A673 (cell line): ENCODE measurements at regions of chr7 and their contacts with region 1.

Region 1: GRCh38 chr7:82109288-82109687 is 334.3 kb downstream of the CACNA2D1 start:
- DNase-seq: peak; percentile 50
- H3K4me3 ChIP-seq: no peak overlapping the region
- H3K27ac ChIP-seq: no peak overlapping the region
- H3K4me1 ChIP-seq: peaks cover 47% of the 10 kb centered on the region
- H3K27me3 ChIP-seq: no peaks in the 10 kb centered on the region
- CTCF ChIP-seq: no peak

Region 2: GRCh38 chr7:82146491-82146890 is 37.2 kb after region 1 on chr7:
- CTCF ChIA-PET with region 1: no interaction called
- POLR2A ChIA-PET with region 1: interaction called, 16 read pairs
- intact Hi-C with region 1: no loop called
- DNase-seq: no peak
- H3K4me3 ChIP-seq: no peak overlapping the region
- H3K27ac ChIP-seq: no peak overlapping the region
- H3K4me1 ChIP-seq: peaks cover 14% of the 10 kb centered on the region
- H3K27me3 ChIP-seq: peaks cover 16% of the 10 kb centered on the region
- CTCF ChIP-seq: no peak

Region 3: DNA sequence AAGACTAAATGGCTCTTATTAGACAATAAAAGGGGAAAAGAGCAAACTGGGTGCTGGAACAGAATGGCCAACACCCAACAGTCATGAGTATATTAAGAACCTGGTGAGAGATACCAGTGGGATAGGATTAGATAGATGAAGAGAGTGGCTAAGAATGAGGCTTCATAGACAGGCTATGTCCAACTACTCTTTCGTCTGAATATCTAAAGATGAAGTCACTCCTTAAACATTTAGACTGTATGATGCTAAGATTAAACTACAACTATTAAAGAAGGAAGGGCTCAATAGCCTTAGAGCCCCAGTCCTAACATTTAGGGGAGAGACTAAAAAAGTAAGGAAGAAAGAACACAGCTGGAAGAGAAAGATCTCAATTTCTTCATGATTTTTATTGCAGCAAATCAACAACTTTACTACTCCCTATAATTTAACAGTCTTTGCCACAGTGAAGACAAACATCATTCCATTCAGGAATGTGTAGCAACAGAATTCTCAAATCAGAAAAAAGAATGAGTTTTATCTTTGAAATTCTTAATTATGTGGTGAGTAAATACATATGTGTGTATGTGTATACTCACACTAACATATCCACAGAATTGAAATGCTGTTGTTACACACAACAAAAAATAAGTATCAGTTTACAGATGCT is 288.7 kb after region 1 on chr7:
- CTCF ChIA-PET with region 1: no interaction called
- POLR2A ChIA-PET with region 1: no interaction called
- intact Hi-C with region 1: no loop called
- DNase-seq: no peak
- H3K4me3 ChIP-seq: no peak overlapping the region
- H3K27ac ChIP-seq: peak overlapping the region; percentile 45
- H3K4me1 ChIP-seq: peaks cover 46% of the 10 kb centered on the region
- H3K27me3 ChIP-seq: no peaks in the 10 kb centered on the region
- CTCF ChIP-seq: no peak